ENCODE measurements at regions of chr1 and their contacts with region 1.

Region 1: DNA sequence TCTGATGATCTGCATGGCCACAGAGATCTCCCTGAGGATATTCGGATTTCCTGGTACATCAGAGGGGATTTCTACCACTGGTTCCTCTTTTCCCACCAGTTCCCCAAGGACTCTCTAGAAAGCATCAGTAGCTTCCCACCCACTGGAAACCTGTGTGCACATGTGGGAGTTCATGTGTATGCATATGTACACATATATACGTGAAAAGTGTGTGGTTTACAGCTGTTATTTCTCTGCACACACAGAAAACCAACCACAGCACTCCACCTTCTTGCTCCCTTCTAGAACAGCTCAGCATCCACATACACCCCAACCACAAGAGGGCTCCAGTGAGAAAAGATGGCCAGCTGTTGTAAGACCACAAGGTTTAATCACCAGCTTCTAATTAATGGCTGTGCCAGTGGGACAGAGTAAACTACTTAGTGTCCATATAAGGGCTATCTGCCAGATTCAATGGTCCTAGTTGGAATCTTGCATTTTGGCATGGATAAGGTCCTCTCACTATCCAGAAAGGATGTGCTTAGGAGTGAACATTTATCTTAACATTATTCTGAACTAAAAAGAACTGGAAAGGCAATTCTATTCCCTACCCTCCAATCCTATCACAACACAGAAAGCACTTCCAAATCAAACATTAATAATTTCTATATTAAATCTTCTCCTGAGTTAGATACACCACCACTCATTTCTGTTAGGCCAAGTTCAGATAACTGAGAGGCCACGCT is 24.1 kb downstream of the GPR3 start:
- DNase-seq: peak in 29 of 35 experiments; percentile 27 to 79 (median 45)
- ATAC-seq: peak; percentile 54 to 74 (median 68)
- H3K4me3 ChIP-seq: no peak overlapping the region
- H3K4me3 Mint-ChIP-seq: no peak overlapping the region
- H3K27ac ChIP-seq: no peak overlapping the region
- H3K27ac Mint-ChIP-seq: peak overlapping the region; percentile 48 to 69
- H3K4me1 ChIP-seq: peaks cover 8 to 18% of the 10 kb centered on the region in 2 experiments
- H3K4me1 Mint-ChIP-seq: peaks cover 38 to 47% (median 41%) of the 10 kb centered on the region in 3 donors
- H3K27me3 ChIP-seq: no peaks in the 10 kb centered on the region
- H3K27me3 Mint-ChIP-seq: no peaks in the 10 kb centered on the region

Region 2: GRCh38 chr1:26932531-26932930 is 484.0 kb before region 1 on chr1:
- CTCF ChIA-PET with region 1: no interaction called
- POLR2A ChIA-PET with region 1: no interaction called
- DNase-seq: no peak
- ATAC-seq: no peak
- H3K4me3 ChIP-seq: no peak overlapping the region
- H3K4me3 Mint-ChIP-seq: no peak overlapping the region
- H3K27ac ChIP-seq: no peak overlapping the region
- H3K27ac Mint-ChIP-seq: no peak overlapping the region
- H3K4me1 ChIP-seq: no peaks in the 10 kb centered on the region
- H3K4me1 Mint-ChIP-seq: peaks cover 4 to 6% (median 5%) of the 10 kb centered on the region in 3 donors
- H3K27me3 ChIP-seq: no peaks in the 10 kb centered on the region
- H3K27me3 Mint-ChIP-seq: no peaks in the 10 kb centered on the region

Region 3: GRCh38 chr1:27341525-27342252 is 74.9 kb before region 1 on chr1 and contains the start of gene SYTL1:
- CTCF ChIA-PET with region 1: no interaction called
- POLR2A ChIA-PET with region 1: no interaction called
- DNase-seq: peak in 34 of 35 experiments; percentile 40 to 77 (median 62)
- ATAC-seq: peak; percentile 65 to 71 (median 68)
- H3K4me3 ChIP-seq: peak within 1 kb of the TSS; percentile 86 to 95
- H3K4me3 Mint-ChIP-seq: peak within 1 kb of the TSS; percentile 86 to 94 (median 87)
- H3K27ac ChIP-seq: peak within 1 kb of the TSS; percentile 91
- H3K27ac Mint-ChIP-seq: peak within 1 kb of the TSS; percentile 88 to 94
- H3K4me1 ChIP-seq: peaks cover 21 to 68% of the 10 kb centered on the region in 2 experiments
- H3K4me1 Mint-ChIP-seq: peaks cover 47 to 66% (median 57%) of the 10 kb centered on the region in 3 donors
- H3K27me3 ChIP-seq: no peaks in the 10 kb centered on the region
- H3K27me3 Mint-ChIP-seq: no peaks in the 10 kb centered on the region
- total RNA-seq, gene SYTL1: 169 to 240 (median 199) TPM

Region 4: GRCh38 chr1:27475720-27476119 is 59.2 kb after region 1 on chr1:
- CTCF ChIA-PET with region 1: no interaction called
- POLR2A ChIA-PET with region 1: interaction called in 1 of 2 experiments, 11 read pairs
- DNase-seq: no peak
- ATAC-seq: no peak
- H3K4me3 ChIP-seq: no peak overlapping the region
- H3K4me3 Mint-ChIP-seq: peak overlapping the region in 1 of 3 donors; percentile 40
- H3K27ac ChIP-seq: no peak overlapping the region
- H3K27ac Mint-ChIP-seq: peak overlapping the region in 1 of 2 donors; percentile 5
- H3K4me1 ChIP-seq: peaks cover 22 to 47% of the 10 kb centered on the region in 2 experiments
- H3K4me1 Mint-ChIP-seq: peaks cover 75 to 80% (median 76%) of the 10 kb centered on the region in 3 donors
- H3K27me3 ChIP-seq: no peaks in the 10 kb centered on the region
- H3K27me3 Mint-ChIP-seq: no peaks in the 10 kb centered on the region

Region 5: GRCh38 chr1:27605796-27606707 is 189.5 kb after region 1 on chr1:
- CTCF ChIA-PET with region 1: interaction called in 1 of 2 experiments, 10 read pairs
- POLR2A ChIA-PET with region 1: no interaction called
- DNase-seq: peak in 34 of 35 experiments; percentile 14 to 79 (median 52)
- ATAC-seq: no peak
- H3K4me3 ChIP-seq: no peak overlapping the region
- H3K4me3 Mint-ChIP-seq: peak overlapping the region in 2 of 3 donors; percentile 90 to 91
- H3K27ac ChIP-seq: no peak overlapping the region
- H3K27ac Mint-ChIP-seq: peak overlapping the region; percentile 34 to 76
- H3K4me1 ChIP-seq: peaks cover 25 to 73% of the 10 kb centered on the region in 2 experiments
- H3K4me1 Mint-ChIP-seq: peaks cover 24 to 33% (median 29%) of the 10 kb centered on the region in 3 donors
- H3K27me3 ChIP-seq: no peaks in the 10 kb centered on the region
- H3K27me3 Mint-ChIP-seq: no peaks in the 10 kb centered on the region

Region 6: GRCh38 chr1:28552758-28553663 is 1136.5 kb after region 1 on chr1 and contains the start of gene TRNAU1AP:
- CTCF ChIA-PET with region 1: no interaction called
- POLR2A ChIA-PET with region 1: interaction called in 1 of 2 experiments, 10 read pairs
- DNase-seq: peak; percentile 92 to 98 (median 96)
- ATAC-seq: peak; percentile 93 to 97 (median 95)
- H3K4me3 ChIP-seq: peak within 1 kb of the TSS; percentile 88 to 89
- H3K4me3 Mint-ChIP-seq: peak within 1 kb of the TSS; percentile 91 to 99 (median 98)
- H3K27ac ChIP-seq: peak within 1 kb of the TSS; percentile 77
- H3K27ac Mint-ChIP-seq: peak within 1 kb of the TSS; percentile 95 to 97
- H3K4me1 ChIP-seq: peaks cover 2 to 20% of the 10 kb centered on the region in 2 experiments
- H3K4me1 Mint-ChIP-seq: peaks cover 22 to 27% (median 26%) of the 10 kb centered on the region in 3 donors
- H3K27me3 ChIP-seq: no peaks in the 10 kb centered on the region
- H3K27me3 Mint-ChIP-seq: no peaks in the 10 kb centered on the region
- total RNA-seq, gene TRNAU1AP: 28.6 to 47.6 (median 41.3) TPM

Region 7: GRCh38 chr1:28560886-28561285 is 1144.3 kb after region 1 on chr1:
- CTCF ChIA-PET with region 1: interaction called in 1 of 2 experiments, 10 read pairs
- POLR2A ChIA-PET with region 1: no interaction called
- DNase-seq: no peak
- ATAC-seq: no peak
- H3K4me3 ChIP-seq: no peak overlapping the region
- H3K4me3 Mint-ChIP-seq: no peak overlapping the region
- H3K27ac ChIP-seq: no peak overlapping the region
- H3K27ac Mint-ChIP-seq: no peak overlapping the region
- H3K4me1 ChIP-seq: no peaks in the 10 kb centered on the region
- H3K4me1 Mint-ChIP-seq: peaks cover 0 to 2% (median 0%) of the 10 kb centered on the region in 3 donors
- H3K27me3 ChIP-seq: no peaks in the 10 kb centered on the region
- H3K27me3 Mint-ChIP-seq: no peaks in the 10 kb centered on the region